ENCODE measurements at regions of chr19 and their contacts with region 1.

Region 1: GRCh38 chr19:38849860-38850435 is at the start of gene HNRNPL:
- DNase-seq: peak; percentile 100
- H3K4me3 ChIP-seq: peak within 1 kb of the TSS; percentile 74 to 86 (median 75)
- H3K27ac ChIP-seq: peak within 1 kb of the TSS; percentile 89
- H3K4me1 ChIP-seq: peaks cover 31% of the 10 kb centered on the region
- H3K27me3 ChIP-seq: no peaks in the 10 kb centered on the region
- CTCF ChIP-seq: peak; percentile 4 to 62
- total RNA-seq, gene HNRNPL: 200 to 391 TPM

Region 2: DNA sequence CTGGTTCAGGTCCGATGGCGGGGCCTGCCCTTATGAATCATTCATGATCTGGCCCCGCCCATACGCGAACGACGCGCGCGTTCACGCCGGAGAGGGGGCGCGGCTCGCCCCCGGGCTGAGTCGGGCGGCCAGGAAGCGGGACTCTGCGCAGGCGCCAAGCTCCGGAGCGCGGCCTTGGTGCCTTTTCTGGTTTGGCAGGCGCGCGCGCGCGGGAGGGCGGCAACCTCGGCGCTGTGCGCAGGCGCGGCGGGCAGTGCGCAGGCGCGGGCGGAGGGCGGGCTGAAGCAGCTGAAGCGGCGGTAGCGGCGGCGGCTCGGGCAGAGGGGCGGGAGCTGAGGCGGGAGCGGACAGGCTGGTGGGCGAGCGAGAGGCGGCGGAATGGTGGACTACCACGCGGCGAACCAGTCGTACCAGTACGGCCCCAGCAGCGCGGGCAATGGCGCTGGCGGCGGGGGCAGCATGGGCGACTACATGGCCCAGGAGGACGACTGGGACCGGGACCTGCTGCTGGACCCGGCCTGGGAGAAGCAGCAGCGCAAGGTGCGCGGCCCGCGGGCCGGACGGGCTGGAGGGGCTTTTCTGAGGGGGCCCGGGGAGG is 202.5 kb before region 1 on chr19 and contains the start of gene ACTN4:
- CTCF ChIA-PET with region 1: interaction called, 6 read pairs
- dilution Hi-C with region 1: no loop called
- in situ Hi-C with region 1: loop called in 1 of 2 experiments (anchors 10 kb)
- intact Hi-C with region 1: no loop called
- DNase-seq: peak; percentile 96
- H3K4me3 ChIP-seq: peak within 1 kb of the TSS; percentile 89 to 99 (median 95)
- H3K27ac ChIP-seq: peak within 1 kb of the TSS; percentile 100
- H3K4me1 ChIP-seq: peaks cover 20% of the 10 kb centered on the region
- H3K27me3 ChIP-seq: no peaks in the 10 kb centered on the region
- CTCF ChIP-seq: no peak
- total RNA-seq, gene ACTN4: 951 to 1,146 TPM

Region 3: DNA sequence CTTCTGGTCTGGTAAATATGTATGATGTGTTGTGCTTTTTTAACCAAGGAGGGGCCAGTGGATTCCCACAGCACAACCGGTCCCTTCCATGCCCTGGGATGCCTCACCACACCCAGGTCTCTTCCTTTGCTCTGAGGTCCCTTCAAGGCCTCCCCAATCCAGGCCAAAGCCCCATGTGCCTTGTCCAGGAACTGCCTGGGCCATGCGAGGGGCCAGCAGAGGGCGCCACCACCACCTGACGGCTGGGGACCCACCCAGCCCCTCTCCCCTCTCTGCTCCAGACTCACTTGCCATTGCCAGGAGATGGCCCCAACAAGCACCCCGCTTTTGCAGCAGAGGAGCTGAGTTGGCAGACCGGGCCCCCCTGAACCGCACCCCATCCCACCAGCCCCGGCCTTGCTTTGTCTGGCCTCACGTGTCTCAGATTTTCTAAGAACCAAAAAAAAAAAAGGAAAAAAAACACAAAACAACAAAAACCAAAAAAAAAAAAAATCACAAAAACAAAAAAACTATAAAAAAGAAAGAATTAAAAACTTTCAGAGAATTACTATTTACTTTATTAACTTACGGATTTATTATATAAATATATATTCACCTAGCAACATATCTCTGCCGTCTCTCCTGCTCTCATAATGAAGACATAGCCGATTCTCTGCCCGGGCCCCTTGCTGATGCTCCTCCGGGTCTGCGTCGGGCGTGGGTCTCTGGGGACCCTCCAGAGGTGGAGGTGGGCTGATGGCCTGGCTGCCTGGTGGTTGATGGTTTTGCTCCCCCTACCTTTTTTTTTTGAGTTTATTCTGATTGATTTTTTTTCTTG is 120.1 kb before region 1 on chr19:
- CTCF ChIA-PET with region 1: no interaction called
- dilution Hi-C with region 1: no loop called
- in situ Hi-C with region 1: loop called in 1 of 2 experiments (anchors 25 kb)
- intact Hi-C with region 1: no loop called
- DNase-seq: peak; percentile 43
- H3K4me3 ChIP-seq: no peak overlapping the region
- H3K27ac ChIP-seq: no peak overlapping the region
- H3K4me1 ChIP-seq: peaks cover 24% of the 10 kb centered on the region
- H3K27me3 ChIP-seq: no peaks in the 10 kb centered on the region
- CTCF ChIP-seq: peak; percentile 59 to 85

Region 4: GRCh38 chr19:38869856-38870607 is 20.1 kb after region 1 on chr19:
- CTCF ChIA-PET with region 1: no interaction called
- dilution Hi-C with region 1: no loop called
- in situ Hi-C with region 1: no loop called
- intact Hi-C with region 1: loop called (anchors 1 kb)
- DNase-seq: peak; percentile 46
- H3K4me3 ChIP-seq: peak overlapping the region in 1 of 3 experiments; percentile 39
- H3K27ac ChIP-seq: no peak overlapping the region
- H3K4me1 ChIP-seq: peaks cover 13% of the 10 kb centered on the region
- H3K27me3 ChIP-seq: no peaks in the 10 kb centered on the region
- CTCF ChIP-seq: peak; percentile 45 to 78

Region 5: GRCh38 chr19:38899447-38900219 is 49.7 kb after region 1 on chr19 and contains the starts of genes NFKBIB and SIRT2:
- CTCF ChIA-PET with region 1: interaction called, 3 read pairs
- dilution Hi-C with region 1: no loop called
- in situ Hi-C with region 1: no loop called
- intact Hi-C with region 1: loop called (anchors 1 kb)
- DNase-seq: peak; percentile 100
- H3K4me3 ChIP-seq: peak within 1 kb of the TSS; percentile 84 to 93 (median 93)
- H3K27ac ChIP-seq: peak within 1 kb of the TSS; percentile 96
- H3K4me1 ChIP-seq: peaks cover 13% of the 10 kb centered on the region
- H3K27me3 ChIP-seq: no peaks in the 10 kb centered on the region
- CTCF ChIP-seq: no peak
- total RNA-seq, gene NFKBIB: 9.5 to 27.2 TPM
- total RNA-seq, gene SIRT2: 43.3 to 65.3 TPM

Region 6: DNA sequence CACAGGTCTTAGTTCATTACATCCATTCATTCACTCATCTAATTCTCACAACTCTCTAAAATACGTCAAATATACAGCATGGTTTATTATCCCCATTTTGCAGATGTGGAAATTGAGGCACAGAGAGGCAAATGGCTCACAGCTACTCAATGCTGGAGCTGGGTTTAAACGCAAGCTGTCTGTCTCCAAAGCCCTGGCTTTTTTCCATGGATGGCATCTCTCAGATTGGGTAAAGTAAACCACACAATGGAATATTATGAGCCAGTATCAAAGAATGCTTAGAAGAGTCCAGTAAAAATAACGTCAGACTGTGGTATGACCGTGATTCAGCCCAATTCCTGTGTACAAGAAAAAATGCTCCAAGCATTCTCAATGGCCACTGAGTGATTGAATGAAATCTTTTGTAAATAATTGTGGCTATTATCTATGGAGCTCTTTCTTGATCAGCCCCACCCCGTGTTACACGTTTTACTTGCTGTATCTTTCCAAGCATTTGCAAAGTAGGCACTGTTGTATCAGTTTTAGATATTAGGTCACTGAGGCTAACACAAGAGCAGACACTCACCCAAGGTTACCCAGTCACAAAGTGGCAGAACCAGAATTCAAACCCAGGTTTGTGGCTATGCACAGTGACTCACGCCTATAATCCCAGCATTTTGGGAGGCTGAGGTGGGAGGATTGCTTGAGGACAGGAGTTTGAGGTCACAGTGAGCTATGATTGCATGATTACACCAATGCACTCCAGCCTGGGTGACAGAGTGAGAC is 228.7 kb after region 1 on chr19:
- CTCF ChIA-PET with region 1: no interaction called
- dilution Hi-C with region 1: no loop called
- in situ Hi-C with region 1: no loop called
- intact Hi-C with region 1: loop called (anchors 2 kb)
- DNase-seq: peak; percentile 98
- H3K4me3 ChIP-seq: no peak overlapping the region
- H3K27ac ChIP-seq: peak overlapping the region; percentile 87
- H3K4me1 ChIP-seq: peaks cover 40% of the 10 kb centered on the region
- H3K27me3 ChIP-seq: no peaks in the 10 kb centered on the region
- CTCF ChIP-seq: no peak

Measured in mammary epithelial cell (primary cell).